HepG2 (cell line): ENCODE measurements at regions of chr17 and their contacts with region 1.

Region 1: GRCh38 chr17:56592487-56593085 is 913 bp upstream of the NOG start:
- DNase-seq: peak; percentile 11
- ATAC-seq: peak; percentile 76
- H3K4me3 ChIP-seq: peak overlapping the region; percentile 12 to 67 (median 39); a peak in 4 of 6 replicates
- H3K27ac ChIP-seq: no peak overlapping the region
- H3K4me1 ChIP-seq: peaks cover 14% of the 10 kb centered on the region; the same call in 1 of the 2 replicates
- H3K27me3 ChIP-seq: peaks cover 23 to 89% of the 10 kb centered on the region in 2 experiments
- CTCF ChIP-seq: peak; percentile 81
- EP300 ChIP-seq: no peak
- POLR2A ChIP-seq: no peak
- RAD21 ChIP-seq: peak; percentile 98

Region 2: GRCh38 chr17:56608951-56609350 is 16.4 kb after region 1 on chr17:
- CTCF ChIA-PET with region 1: no interaction called
- POLR2A ChIA-PET with region 1: no interaction called
- in situ Hi-C with region 1: no loop called
- intact Hi-C with region 1: no loop called
- DNase-seq: no peak
- ATAC-seq: no peak
- H3K4me3 ChIP-seq: no peak overlapping the region
- H3K27ac ChIP-seq: no peak overlapping the region
- H3K4me1 ChIP-seq: no peaks in the 10 kb centered on the region
- H3K27me3 ChIP-seq: no peaks in the 10 kb centered on the region; a peak in 1 of 5 replicates
- CTCF ChIP-seq: no peak
- EP300 ChIP-seq: no peak
- POLR2A ChIP-seq: no peak
- RAD21 ChIP-seq: no peak

Region 3: DNA sequence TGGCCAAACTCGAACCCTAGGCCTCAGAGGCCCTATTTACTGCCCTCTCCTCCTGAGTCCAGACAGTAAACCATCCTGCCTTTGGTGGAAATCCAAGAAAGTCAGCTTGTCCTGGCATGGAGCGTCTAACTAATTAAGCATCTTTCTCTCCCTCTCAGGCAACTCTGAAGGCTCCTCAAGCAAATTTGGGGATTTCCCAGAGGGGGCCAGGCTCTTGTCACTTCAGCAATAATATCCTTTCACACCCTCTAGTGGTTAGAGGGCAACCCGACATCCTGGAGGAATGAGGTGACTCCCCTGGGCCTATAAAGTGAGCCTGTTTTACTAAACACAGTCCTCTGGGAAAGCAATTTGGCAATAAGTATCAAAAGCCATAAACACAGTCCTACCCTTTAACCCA is 61.3 kb after region 1 on chr17:
- CTCF ChIA-PET with region 1: no interaction called
- POLR2A ChIA-PET with region 1: no interaction called
- in situ Hi-C with region 1: no loop called
- intact Hi-C with region 1: loop called (anchors 1 kb)
- DNase-seq: peak; percentile 38
- ATAC-seq: peak; percentile 94
- H3K4me3 ChIP-seq: no peak overlapping the region
- H3K27ac ChIP-seq: no peak overlapping the region
- H3K4me1 ChIP-seq: no peaks in the 10 kb centered on the region
- H3K27me3 ChIP-seq: no peaks in the 10 kb centered on the region
- CTCF ChIP-seq: peak; percentile 33; the same call in 1 of the 2 replicates
- EP300 ChIP-seq: no peak
- POLR2A ChIP-seq: no peak
- RAD21 ChIP-seq: no peak

Region 4: GRCh38 chr17:56679115-56679766 is 86.7 kb after region 1 on chr17:
- CTCF ChIA-PET with region 1: interaction called, 4 read pairs
- POLR2A ChIA-PET with region 1: no interaction called
- in situ Hi-C with region 1: no loop called
- intact Hi-C with region 1: loop called (anchors 1 kb)
- DNase-seq: peak; percentile 15
- ATAC-seq: peak; percentile 87
- H3K4me3 ChIP-seq: no peak overlapping the region
- H3K27ac ChIP-seq: no peak overlapping the region
- H3K4me1 ChIP-seq: 0 out of 2 replicates have a peak, but pooled peaks cover 4% of the 10 kb centered on the region
- H3K27me3 ChIP-seq: peaks cover 5 to 41% of the 10 kb centered on the region in 2 experiments; a peak in 4 of 5 replicates
- CTCF ChIP-seq: peak; percentile 60
- EP300 ChIP-seq: no peak
- POLR2A ChIP-seq: no peak
- RAD21 ChIP-seq: no peak

Region 5: DNA sequence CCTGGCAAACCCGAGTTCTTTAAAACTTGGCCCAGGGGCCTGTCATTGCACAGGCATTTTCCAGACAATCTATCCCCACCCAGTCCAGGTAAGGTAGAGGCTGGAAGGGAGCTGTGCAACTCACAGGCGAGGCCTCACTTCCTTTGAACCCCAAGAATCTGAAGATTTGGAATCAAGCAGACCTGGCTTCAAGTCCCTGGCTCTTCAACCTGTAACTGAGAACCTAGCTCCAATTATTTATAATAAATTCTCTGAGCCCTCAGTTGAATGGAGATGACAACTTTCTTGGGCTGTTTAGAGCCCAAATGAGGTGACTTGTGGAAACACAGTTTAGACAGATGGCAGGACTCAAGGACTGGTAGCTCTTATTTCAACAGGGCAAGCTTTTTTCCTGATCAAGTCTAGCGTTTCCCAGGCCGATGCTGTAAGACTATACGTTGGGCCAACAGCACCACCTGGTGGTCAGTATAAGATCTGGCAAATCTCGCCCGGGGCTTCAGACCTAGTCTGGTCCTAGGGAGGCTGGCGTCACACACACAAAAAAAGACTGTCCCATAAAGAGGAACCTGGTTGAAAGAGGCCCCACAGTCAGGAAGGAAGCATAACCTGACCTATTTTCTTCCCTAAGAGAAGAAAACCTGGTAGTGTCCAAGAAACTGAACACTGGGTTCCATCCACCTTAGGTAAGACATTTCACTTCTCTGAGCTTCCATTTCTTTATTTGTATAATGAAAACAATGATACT is 123.2 kb after region 1 on chr17:
- CTCF ChIA-PET with region 1: interaction called, 31 read pairs
- POLR2A ChIA-PET with region 1: no interaction called
- in situ Hi-C with region 1: no loop called
- intact Hi-C with region 1: loop called (anchors 1 kb)
- DNase-seq: peak; percentile 65
- ATAC-seq: peak; percentile 97
- H3K4me3 ChIP-seq: no peak overlapping the region
- H3K27ac ChIP-seq: no peak overlapping the region
- H3K4me1 ChIP-seq: no peaks in the 10 kb centered on the region
- H3K27me3 ChIP-seq: peaks cover 0 to 37% of the 10 kb centered on the region in 2 experiments; a peak in 4 of 5 replicates
- CTCF ChIP-seq: peak; percentile 91
- EP300 ChIP-seq: no peak
- POLR2A ChIP-seq: no peak
- RAD21 ChIP-seq: peak; percentile 78

Region 6: DNA sequence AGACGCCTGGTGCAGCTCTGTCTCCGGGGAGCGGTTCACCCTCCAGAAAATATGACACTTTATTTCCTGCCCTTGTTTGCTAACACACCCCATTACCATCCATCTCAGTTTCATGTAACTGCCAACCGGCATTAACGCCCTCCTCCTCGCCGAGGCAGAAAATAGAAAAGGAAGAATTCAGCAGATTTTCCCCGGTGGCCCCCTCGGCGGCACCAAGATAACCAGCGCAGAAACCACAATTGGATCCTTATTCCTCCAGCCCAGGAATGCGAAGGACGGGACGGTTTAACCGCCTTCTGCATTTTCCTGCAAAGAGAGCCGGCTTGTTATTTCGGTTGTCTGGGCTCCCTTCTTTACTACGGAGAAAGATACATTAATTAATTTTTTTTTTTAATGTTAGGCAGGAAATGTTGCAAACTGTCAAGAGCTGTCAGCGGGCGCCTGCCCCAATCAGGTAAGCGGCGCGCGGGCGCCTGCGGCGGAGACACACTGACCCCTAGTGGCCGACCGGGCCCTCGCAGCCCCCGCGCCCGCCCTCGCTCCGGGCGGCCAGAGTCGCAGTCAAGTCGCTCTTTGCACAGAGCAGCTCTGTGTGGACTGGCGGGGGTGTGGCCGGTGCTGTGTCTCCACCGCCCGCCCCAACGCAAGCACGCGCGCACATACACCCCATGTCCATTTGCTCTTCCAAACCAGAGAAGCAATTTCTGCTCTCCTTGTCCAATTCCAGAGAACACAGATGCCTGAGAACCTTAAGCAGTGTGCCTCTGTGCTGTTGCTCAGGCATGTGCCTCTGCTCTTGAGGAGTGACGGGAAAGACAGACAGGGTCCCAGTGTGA is 187.5 kb after region 1 on chr17:
- CTCF ChIA-PET with region 1: interaction called, 27 read pairs
- POLR2A ChIA-PET with region 1: no interaction called
- in situ Hi-C with region 1: loop called (anchors 5 kb)
- intact Hi-C with region 1: loop called (anchors 1 kb)
- DNase-seq: peak; percentile 67
- ATAC-seq: peak; percentile 100
- H3K4me3 ChIP-seq: peak overlapping the region in 1 of 3 experiments; percentile 44; a peak in 2 of 6 replicates
- H3K27ac ChIP-seq: no peak overlapping the region
- H3K4me1 ChIP-seq: peaks cover 13% of the 10 kb centered on the region
- H3K27me3 ChIP-seq: peaks cover 0 to 47% of the 10 kb centered on the region in 2 experiments; a peak in 3 of 5 replicates
- CTCF ChIP-seq: peak; percentile 95
- EP300 ChIP-seq: no peak
- POLR2A ChIP-seq: no peak
- RAD21 ChIP-seq: peak; percentile 97